GM13977 (cell line): ENCODE measurements at regions of chr10 and their contacts with region 1.

Region 1: DNA sequence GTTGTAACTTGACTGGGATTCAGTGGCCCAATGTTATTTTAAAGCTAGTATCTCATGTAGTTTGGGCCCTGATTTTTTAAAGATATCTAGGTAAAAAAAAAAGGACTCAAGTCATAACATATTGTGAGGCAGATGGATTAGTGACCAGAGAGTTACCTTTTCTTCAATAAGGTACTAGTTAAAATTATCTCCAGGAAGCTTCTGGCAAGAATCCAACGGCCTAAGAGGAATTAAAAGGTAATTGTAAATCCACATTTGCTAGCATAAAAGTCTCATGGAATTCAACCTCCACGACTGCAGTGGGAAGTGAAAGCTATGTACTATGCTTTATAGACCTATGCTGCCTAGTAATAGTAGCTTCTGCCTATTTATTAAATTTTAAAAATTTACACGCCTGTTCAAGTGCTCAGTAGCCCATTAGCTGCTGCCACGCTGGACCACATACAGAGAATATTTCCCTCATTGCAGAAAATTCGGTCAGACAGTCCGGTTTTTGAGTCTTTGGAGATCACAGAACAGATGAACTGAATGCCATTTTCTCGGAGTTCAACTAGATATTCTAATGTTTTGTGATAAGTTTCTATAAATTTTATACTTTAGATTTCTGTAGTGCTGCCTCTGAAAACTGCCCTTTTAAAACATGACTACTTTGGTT is 118.4 kb downstream of the NSUN6 start:
- DNase-seq: no peak
- CTCF ChIP-seq: no peak

Region 2: DNA sequence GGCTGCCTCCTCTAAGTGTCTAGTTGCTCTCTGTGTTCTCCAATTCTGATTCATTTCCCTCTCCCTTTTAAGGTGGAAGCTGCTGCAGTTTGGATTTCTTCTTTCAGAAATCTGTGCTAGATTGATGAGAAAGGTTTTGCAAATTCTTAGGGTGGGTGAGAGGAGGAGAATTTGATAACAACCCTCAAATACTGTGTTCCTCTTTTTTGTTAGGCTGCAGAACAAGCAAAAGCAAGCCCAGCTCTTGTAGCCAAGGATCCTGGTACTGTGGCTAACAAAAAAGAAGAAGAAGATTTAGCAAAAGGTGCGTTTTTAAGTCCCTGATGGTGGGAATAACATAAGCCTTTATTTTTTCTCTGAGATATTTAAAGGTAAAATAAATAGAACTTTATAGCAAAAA is 840.0 kb before region 1 on chr10:
- in situ Hi-C with region 1: no loop called
- DNase-seq: no peak
- CTCF ChIP-seq: no peak

Region 3: DNA sequence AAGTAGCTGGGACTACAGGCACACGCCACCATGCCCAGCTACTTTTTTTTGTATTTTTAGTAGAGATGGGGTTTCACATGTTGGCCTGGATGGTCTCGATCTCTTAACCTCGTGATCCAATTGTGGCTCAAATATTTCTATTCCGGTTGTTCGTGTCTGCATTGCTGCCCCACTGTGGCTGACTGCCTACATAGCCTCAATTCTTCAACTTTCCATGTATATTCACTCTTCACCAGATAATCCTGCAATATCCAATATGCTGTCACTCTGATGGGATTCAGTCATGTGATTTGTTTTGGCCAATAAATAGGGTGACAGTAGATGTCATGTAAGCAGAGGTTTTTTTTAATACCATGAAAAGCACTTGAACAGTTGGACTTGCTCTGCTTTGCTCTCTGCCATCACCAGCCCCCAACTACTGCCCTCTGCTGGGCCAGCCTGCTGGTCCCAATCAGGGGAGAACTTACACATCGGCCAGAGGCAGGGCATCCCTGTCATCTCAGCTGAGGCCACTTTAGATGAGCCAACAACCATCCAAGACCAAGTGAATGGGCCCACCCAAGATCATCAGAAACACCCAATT is 61.7 kb after region 1 on chr10:
- in situ Hi-C with region 1: loop called (anchors 10 kb)
- DNase-seq: no peak
- CTCF ChIP-seq: peak; percentile 34

Region 4: GRCh38 chr10:18666810-18667209 is 133.8 kb after region 1 on chr10:
- in situ Hi-C with region 1: no loop called
- DNase-seq: no peak
- CTCF ChIP-seq: no peak

Region 5: DNA sequence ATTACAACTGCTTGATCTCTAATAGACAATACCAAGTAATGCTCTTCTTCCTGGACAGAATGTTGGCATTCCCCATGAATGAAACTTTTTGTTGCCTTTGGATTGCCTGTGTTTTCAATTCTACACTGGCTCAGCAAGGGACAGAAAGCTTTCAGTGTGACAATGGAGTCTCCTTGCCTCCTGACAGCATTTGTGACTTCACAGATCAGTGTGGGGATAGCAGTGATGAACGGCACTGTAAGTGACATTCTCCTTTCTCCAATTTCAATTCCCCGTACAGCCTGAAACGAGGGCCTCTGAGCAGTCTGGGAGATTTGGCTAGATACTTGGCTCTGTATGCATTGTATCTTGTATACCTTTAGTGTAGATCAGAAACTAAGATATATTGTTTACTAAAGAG is 515.9 kb after region 1 on chr10:
- in situ Hi-C with region 1: no loop called
- DNase-seq: no peak
- CTCF ChIP-seq: no peak